ENCODE measurements at regions of chr17 and their contacts with region 1.

Region 1: DNA sequence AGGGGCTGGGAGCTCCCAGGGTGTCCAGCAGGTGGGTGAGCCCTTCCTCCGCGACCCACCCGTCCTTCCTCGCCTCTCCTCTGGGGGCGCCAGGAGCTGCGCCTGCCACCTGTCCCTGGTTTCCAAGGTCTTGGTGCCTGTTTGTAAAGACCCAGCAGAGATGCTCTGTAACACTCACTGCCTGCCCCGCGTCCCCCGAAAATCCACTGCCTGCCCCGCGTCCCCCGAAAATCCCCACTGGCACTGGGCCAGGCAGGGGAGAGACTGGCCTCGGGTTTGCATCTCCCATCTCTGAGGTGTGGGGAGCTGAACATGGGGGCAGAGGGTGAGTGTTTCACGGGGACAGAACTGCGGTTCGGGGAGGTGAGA is 45.6 kb downstream of the BAHCC1 start:
- DNase-seq: peak; percentile 45
- H3K4me3 ChIP-seq: no peak overlapping the region
- H3K27ac ChIP-seq: peak overlapping the region; percentile 57
- H3K4me1 ChIP-seq: peaks cover 19% of the 10 kb centered on the region
- H3K27me3 ChIP-seq: no peaks in the 10 kb centered on the region
- CTCF ChIP-seq: peak; percentile 69

Region 2: DNA sequence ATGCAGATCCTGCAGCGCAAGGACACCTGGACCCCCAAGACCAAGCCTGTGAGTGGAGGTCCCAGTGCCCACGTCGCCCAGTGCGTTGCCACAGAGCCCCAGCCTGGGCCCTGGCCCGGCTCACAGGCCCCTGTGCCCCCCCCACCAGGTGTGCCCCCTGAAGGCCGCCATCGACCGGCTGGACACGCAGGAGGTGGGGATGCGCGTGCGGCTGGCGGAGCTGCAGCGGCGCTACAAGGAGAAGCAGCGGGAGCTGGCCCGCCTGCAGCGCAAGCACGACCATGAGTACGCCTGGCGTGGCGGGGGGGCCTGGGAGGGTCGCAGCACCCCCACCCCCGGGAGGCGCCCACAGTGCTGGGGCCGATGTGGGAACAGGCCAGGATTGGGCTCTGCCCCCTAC is 11.0 kb after region 1 on chr17:
- CTCF ChIA-PET with region 1: no interaction called
- POLR2A ChIA-PET with region 1: interaction called, 11 read pairs
- intact Hi-C with region 1: no loop called
- DNase-seq: no peak
- H3K4me3 ChIP-seq: no peak overlapping the region
- H3K27ac ChIP-seq: no peak overlapping the region
- H3K4me1 ChIP-seq: peaks cover 5% of the 10 kb centered on the region
- H3K27me3 ChIP-seq: no peaks in the 10 kb centered on the region
- CTCF ChIP-seq: no peak

Region 3: DNA sequence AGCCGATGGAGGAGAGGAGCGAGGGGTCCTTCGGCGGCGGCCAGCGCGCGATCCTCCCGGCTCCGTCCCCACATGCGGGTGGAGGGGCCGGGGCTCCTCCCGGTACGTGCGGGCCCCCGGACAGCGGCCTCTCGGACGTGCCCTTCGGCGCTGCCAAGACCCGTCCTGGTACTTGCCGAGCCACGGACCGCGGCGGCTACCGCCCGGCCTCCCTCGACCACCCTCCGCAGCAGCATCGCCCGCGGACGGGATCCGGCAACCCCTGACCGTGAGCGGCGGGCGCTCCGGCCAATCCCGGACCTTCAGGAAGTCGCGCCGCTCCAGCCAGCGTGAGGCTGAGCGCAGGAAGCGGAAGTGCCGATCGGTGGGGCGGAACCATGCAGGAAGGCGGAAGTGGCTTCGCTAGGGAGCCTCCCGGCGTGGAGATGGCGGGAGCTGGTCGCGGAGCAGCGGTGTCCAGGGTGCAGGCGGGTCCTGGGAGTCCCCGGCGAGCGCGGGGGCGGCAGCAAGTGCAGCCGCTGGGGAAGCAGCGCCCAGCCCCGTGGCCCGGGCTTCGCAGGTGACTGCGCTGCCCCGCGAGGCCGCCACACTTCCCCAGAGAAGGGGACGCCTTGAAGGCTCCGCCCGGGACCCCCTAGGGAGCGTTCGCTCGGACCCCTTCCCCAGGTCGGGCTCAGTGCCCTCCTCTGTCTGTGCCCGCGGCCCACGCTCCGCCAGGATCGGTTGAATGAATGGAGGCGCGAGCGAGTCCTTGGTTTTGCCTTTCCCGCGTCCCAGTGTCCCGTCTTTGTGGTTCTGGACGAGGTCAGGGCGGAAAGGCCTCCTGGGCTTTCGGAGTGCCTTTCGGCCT is 225.7 kb after region 1 on chr17 and contains the starts of genes CCDC137 and OXLD1:
- CTCF ChIA-PET with region 1: no interaction called
- POLR2A ChIA-PET with region 1: no interaction called
- intact Hi-C with region 1: no loop called
- DNase-seq: peak; percentile 98
- H3K4me3 ChIP-seq: peak within 1 kb of the TSS; percentile 93
- H3K27ac ChIP-seq: peak within 1 kb of the TSS; percentile 92
- H3K4me1 ChIP-seq: peaks cover 18% of the 10 kb centered on the region
- H3K27me3 ChIP-seq: no peaks in the 10 kb centered on the region
- CTCF ChIP-seq: no peak
- total RNA-seq, gene CCDC137: 52.8 and 56.3 TPM in 2 replicates
- total RNA-seq, gene OXLD1: 36.1 and 44.6 TPM in 2 replicates

Region 4: GRCh38 chr17:82077617-82078358 is 636.9 kb after region 1 on chr17:
- CTCF ChIA-PET with region 1: no interaction called
- POLR2A ChIA-PET with region 1: no interaction called
- intact Hi-C with region 1: no loop called
- DNase-seq: no peak
- H3K4me3 ChIP-seq: no peak overlapping the region
- H3K27ac ChIP-seq: peak overlapping the region; percentile 2
- H3K4me1 ChIP-seq: no peaks in the 10 kb centered on the region
- H3K27me3 ChIP-seq: no peaks in the 10 kb centered on the region
- CTCF ChIP-seq: no peak